ENCODE measurements at regions of chr13 and their contacts with region 1.

Region 1: GRCh38 chr13:48110931-48111721 is 16.2 kb upstream of the MED4 start:
- DNase-seq: peak; percentile 56
- H3K4me3 ChIP-seq: no peak overlapping the region
- H3K27ac ChIP-seq: peak overlapping the region; percentile 53
- H3K4me1 ChIP-seq: peaks cover 26% of the 10 kb centered on the region
- H3K27me3 ChIP-seq: peaks cover under 1 to 5% of the 10 kb centered on the region in 2 experiments
- CTCF ChIP-seq: no peak
- POLR2A ChIP-seq: no peak

Region 2: GRCh38 chr13:48028052-48028451 is 83.1 kb before region 1 on chr13:
- CTCF ChIA-PET with region 1: no interaction called
- POLR2A ChIA-PET with region 1: no interaction called
- dilution Hi-C with region 1: no loop called
- intact Hi-C with region 1: no loop called
- DNase-seq: no peak
- H3K4me3 ChIP-seq: no peak overlapping the region
- H3K27ac ChIP-seq: no peak overlapping the region
- H3K4me1 ChIP-seq: no peaks in the 10 kb centered on the region
- H3K27me3 ChIP-seq: no peaks in the 10 kb centered on the region
- CTCF ChIP-seq: no peak
- POLR2A ChIP-seq: no peak

Region 3: DNA sequence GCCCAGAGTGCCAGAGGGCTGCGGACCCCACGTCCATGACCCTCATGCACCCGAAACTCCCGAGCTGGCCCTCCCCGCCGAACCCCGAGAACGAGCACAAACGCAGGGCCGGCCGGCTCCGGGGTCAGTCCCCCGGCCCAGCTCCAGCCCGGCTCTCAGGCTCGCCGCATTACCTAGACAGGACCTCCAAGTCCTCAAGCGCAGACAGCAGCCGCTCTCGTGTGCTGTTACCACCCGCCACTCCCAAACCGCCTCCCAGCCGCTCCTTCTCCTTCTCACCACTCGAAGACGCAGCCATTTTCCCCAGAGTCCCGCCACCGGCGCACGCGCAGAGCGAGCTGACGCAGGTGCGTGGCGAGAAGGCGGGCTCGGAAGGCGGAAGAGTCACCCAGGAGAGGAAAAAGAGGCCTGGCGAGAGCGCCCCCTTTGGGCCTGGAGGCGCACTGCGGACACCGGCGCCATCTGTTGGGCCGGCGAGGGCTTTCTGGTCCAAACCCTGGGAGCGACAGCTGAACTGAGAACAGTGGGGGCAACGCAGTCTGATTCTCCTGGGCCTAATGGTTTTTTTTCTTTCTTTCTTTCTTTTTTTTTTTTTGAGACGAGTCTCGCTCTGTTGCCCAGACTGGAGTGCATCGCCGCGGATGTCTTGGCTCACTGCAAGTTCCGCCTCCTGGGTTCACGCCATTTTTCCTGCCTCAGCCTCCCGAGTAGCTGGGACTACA is 16.2 kb before region 1 on chr13 and contains the start of gene MED4:
- CTCF ChIA-PET with region 1: interaction called, 12 read pairs
- POLR2A ChIA-PET with region 1: no interaction called
- dilution Hi-C with region 1: no loop called
- intact Hi-C with region 1: loop called (anchors 1 kb)
- DNase-seq: peak; percentile 95
- H3K4me3 ChIP-seq: peak within 1 kb of the TSS; percentile 84 to 95 (median 86)
- H3K27ac ChIP-seq: peak within 1 kb of the TSS; percentile 60
- H3K4me1 ChIP-seq: peaks cover 10% of the 10 kb centered on the region
- H3K27me3 ChIP-seq: peaks cover 5% of the 10 kb centered on the region in 2 experiments
- CTCF ChIP-seq: peak; percentile 100
- POLR2A ChIP-seq: peak; percentile 91
- total RNA-seq, gene MED4: 40.1 and 43.3 TPM in 2 replicates

Region 4: DNA sequence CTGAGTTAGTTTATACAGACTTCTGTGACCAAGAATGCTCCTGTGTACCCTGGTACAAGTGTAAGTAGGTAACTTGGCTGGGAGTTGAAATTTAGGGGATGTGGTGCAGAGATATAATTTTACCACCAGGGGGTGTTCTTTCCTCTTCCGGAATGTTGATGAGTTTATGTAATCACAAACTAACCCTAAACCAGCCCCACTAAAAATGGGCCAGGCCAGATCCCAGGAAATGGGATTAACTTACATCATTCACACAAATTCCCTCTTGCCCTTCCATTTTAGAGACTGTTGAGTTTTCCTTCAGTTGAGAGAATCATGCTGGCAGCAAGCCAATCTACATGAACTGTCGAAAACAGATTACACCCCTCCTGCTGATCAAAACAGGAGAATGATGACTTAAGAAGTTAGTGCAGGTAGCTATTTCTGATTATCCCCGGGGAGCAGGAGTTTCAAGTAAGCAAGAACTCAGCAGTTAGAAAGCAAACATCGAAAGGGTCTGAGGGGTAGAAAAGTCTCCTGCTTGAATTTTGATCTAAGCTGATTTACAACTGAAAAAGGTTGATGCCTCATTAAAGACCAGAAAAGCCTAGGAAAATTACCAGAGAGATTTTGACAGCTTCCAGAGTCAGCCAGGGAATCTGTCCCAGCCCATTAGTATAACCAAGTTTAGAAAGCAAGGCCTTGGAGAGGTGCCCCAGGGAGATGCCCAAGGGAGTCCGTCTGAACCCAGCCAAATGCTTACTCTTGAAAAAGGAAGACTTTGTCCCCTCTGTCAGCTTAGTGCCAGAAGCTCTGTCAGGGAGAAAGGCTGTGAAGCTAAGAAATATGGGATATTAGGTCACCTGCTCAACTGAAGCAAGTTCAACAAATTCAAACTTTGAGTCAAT is 16.1 kb after region 1 on chr13:
- CTCF ChIA-PET with region 1: interaction called, 3 read pairs
- POLR2A ChIA-PET with region 1: no interaction called
- dilution Hi-C with region 1: no loop called
- intact Hi-C with region 1: loop called (anchors 1 kb)
- DNase-seq: peak; percentile 66
- H3K4me3 ChIP-seq: no peak overlapping the region
- H3K27ac ChIP-seq: no peak overlapping the region
- H3K4me1 ChIP-seq: peaks cover 15% of the 10 kb centered on the region
- H3K27me3 ChIP-seq: peaks cover 0 to under 1% of the 10 kb centered on the region in 2 experiments
- CTCF ChIP-seq: peak; percentile 58 to 62
- POLR2A ChIP-seq: no peak

Region 5: GRCh38 chr13:48155848-48156247 is 44.7 kb after region 1 on chr13:
- CTCF ChIA-PET with region 1: no interaction called
- POLR2A ChIA-PET with region 1: no interaction called
- dilution Hi-C with region 1: no loop called
- intact Hi-C with region 1: loop called (anchors 2 kb)
- DNase-seq: peak; percentile 86
- H3K4me3 ChIP-seq: no peak overlapping the region
- H3K27ac ChIP-seq: peak overlapping the region; percentile 73
- H3K4me1 ChIP-seq: peaks cover 12% of the 10 kb centered on the region
- H3K27me3 ChIP-seq: no peaks in the 10 kb centered on the region
- CTCF ChIP-seq: no peak
- POLR2A ChIP-seq: no peak

Measured in endothelial cell of umbilical vein (primary cell).